ENCODE measurements at regions of chr1 and their contacts with region 1.

Region 1: GRCh38 chr1:234730770-234731568 is 121.0 kb upstream of the IRF2BP2 start:
- DNase-seq: no peak

Region 2: GRCh38 chr1:234842726-234843641 is 112.0 kb after region 1 on chr1:
- in situ Hi-C with region 1: loop called (anchors 25 kb)
- DNase-seq: no peak

Region 3: DNA sequence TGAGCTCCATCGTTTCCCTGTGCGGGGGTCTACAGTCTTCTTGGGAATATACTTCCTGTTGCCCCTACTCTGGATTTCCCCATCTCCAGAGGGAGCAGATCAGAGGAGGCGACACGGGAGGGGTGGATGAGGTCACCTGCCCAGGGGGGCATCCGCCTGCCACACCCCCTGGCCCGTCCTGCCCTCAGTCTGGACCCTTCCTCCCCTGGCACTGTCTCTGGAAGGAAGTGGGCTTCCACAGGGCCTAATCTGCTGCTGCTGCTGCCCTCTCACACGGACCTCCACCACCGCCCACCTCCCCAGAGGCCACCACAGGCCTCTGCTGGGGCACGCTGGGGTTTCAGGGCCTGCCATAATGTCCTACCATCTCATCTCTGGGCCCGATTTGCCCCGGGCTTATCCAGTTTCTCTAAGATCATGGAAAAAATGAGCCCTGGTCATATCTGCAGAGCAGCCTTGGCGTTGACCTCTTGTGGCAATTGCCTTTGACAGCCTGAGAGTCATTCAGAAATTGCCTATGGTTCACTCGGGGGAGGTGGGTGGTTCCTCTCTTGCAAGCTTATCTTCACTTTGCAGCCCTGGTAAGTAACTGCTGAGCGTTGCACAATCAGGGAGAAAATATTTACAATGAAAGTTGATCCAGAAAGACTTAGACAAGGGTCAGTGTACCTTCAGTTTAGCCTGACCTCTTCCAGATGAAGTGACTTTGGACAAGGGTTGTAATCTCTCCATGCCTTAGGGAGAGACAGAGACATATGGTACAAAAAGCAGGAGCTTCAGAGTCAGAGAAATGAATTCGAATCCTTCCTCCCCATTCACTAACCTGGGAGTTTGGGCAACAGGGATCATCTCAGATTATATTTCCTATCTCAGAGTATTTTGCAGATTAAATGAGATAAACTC is 145.2 kb after region 1 on chr1:
- in situ Hi-C with region 1: no loop called
- DNase-seq: no peak